Heart left ventricle (tissue), 16 donors: ENCODE measurements at regions of chr16 and their contacts with region 1.

Region 1: DNA sequence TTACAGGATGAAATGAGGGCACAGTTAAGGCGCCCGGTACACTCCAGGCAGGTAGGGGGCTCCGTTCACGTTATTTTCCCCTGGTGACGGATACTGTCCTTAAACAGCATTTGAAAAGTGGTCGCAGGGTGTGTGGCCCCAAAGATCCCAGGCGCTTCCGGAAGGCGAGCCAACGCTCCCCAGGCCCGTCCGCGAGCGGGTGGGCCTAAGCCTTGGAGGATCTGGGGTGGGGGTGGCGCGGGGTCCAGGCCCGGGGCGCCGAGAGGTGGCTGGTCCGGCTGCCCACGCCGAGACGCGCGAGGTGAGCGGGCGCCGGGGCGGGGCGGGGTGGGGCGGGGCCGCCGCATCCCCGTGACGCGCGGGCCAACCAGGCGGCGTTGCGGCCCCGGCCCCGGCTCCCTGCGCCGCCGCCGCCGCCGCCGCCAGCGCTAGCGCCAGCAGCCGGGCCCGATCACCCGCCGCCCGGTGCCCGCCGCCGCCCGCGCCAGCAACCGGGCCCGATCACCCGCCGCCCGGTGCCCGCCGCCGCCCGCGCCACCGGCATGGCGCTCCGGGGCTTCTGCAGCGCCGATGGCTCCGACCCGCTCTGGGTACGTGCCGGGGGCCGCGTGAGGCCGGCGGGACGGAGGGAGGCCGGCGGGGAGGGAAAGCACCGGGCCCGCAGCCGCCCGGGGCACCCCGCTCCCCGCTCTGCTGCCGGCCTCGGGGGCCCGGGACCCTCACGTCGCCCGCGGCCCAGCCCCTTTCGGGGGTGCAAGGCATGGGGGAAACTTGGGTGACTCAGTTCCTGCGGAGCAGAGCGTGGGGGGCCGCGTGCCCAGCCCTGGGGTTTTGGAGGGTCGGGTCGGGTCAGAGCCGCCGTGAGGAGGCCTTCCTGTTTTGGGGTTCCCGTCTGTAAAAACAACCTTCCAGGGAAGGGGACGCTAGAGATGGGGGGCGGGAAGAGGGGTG is at the start of gene ABCC1:
- DNase-seq: peak; percentile 33 to 75 (median 51)
- ATAC-seq: peak in 3 of 4 donors; percentile 68 to 86 (median 84)
- H3K4me3 ChIP-seq: peak within 1 kb of the TSS; percentile 67 to 98 (median 86)
- H3K27ac ChIP-seq: peak within 1 kb of the TSS; percentile 15 to 87 (median 79)
- H3K4me1 ChIP-seq: peaks cover 0 to 47% (median 21%) of the 10 kb centered on the region in 12 donors
- H3K27me3 ChIP-seq: no peaks in the 10 kb centered on the region
- CTCF ChIP-seq: peak in 3 of 12 donors; percentile 8 to 22 (median 13)
- POLR2A ChIP-seq: no peak
- total RNA-seq, gene ABCC1: 14.4 to 28.0 (median 24.0) TPM

Region 2: DNA sequence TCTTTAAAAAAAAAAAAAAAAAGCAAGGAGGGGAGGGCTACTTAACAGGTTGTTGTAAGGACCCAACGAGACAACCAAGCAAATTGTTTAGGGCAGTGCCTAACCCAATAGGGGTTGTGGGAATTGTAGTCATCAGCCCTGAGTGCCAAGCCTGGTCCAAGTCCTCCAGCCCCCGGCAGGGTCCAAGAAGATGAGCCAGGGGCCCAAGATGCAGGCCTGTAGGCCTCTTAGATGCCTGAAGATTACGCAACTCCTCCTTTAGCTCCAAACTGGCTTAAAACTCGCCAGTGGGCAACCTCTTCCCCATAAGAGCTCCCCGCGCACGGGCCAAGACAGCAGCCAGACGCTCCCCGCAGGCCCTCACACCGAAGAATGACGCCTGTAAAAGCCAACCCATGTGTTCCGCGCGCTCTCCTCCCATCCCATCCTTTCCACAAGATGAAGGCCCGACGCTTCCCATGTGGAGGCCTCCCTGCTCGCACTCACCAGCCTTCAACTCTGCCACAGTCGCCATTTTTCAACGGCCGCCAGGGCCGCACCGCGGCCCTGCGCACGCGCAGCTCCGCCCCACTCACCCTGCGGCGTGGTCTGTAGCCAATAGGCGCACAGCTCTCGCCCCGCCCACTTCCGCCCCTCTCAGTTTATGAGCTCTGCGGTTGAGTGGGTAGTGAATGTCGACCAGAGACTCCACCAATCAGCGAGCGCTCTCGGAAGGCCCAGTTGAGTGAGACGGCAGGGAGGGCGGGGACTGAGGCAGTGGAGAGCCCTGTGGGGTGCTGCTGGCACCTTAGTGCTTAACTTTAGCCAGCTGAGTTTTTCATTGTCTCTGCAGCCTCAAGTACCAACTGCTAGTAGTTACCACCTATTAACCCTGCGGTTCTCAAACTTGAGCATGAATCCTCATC is 61.2 kb before region 1 on chr16 and contains the start of gene CEP20:
- intact Hi-C with region 1: loop called in 4 of 10 experiments (anchors 5 to 10 kb)
- DNase-seq: peak; percentile 100
- ATAC-seq: peak; percentile 100
- H3K4me3 ChIP-seq: peak within 1 kb of the TSS; percentile 55 to 97 (median 79)
- H3K27ac ChIP-seq: peak within 1 kb of the TSS; percentile 36 to 92 (median 85)
- H3K4me1 ChIP-seq: peaks cover 0 to 33% (median 23%) of the 10 kb centered on the region in 12 donors
- H3K27me3 ChIP-seq: no peaks in the 10 kb centered on the region
- CTCF ChIP-seq: peak in 7 of 12 donors; percentile 17 to 41 (median 25)
- POLR2A ChIP-seq: peak; percentile 39 to 80
- total RNA-seq, gene CEP20: 23.0 to 40.3 (median 28.7) TPM

Region 3: DNA sequence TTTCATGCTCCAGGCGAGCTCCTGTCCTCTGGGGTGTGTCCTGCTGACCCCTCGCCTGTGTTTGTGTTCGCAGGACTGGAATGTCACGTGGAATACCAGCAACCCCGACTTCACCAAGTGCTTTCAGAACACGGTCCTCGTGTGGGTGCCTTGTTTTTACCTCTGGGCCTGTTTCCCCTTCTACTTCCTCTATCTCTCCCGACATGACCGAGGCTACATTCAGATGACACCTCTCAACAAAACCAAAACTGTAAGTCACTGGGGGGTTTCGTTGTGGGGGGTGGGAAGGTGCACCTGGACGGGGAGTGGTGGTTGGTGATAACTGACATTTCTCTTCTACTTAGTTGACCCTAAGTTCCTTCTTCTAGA is 58.2 kb after region 1 on chr16:
- intact Hi-C with region 1: loop called in 2 of 10 experiments (anchors 5 kb)
- DNase-seq: no peak
- ATAC-seq: no peak
- H3K4me3 ChIP-seq: no peak overlapping the region
- H3K27ac ChIP-seq: no peak overlapping the region
- H3K4me1 ChIP-seq: peaks cover 0 to 9% (median 0%) of the 10 kb centered on the region in 12 donors
- H3K27me3 ChIP-seq: no peaks in the 10 kb centered on the region
- CTCF ChIP-seq: no peak
- POLR2A ChIP-seq: no peak

Region 4: GRCh38 chr16:16021988-16022682 is 72.7 kb after region 1 on chr16:
- intact Hi-C with region 1: loop called in 2 of 10 experiments (anchors 5 to 10 kb)
- DNase-seq: peak; percentile 94 to 98 (median 95)
- ATAC-seq: peak; percentile 97 to 99 (median 98)
- H3K4me3 ChIP-seq: peak overlapping the region in 1 of 12 donors; percentile 14
- H3K27ac ChIP-seq: peak overlapping the region; percentile 62 to 88 (median 81)
- H3K4me1 ChIP-seq: peaks cover 8 to 38% (median 22%) of the 10 kb centered on the region in 12 donors
- H3K27me3 ChIP-seq: no peaks in the 10 kb centered on the region
- CTCF ChIP-seq: no peak
- POLR2A ChIP-seq: no peak

Region 5: GRCh38 chr16:16036359-16036792 is 86.9 kb after region 1 on chr16:
- intact Hi-C with region 1: no loop called
- DNase-seq: no peak
- ATAC-seq: no peak
- H3K4me3 ChIP-seq: no peak overlapping the region
- H3K27ac ChIP-seq: no peak overlapping the region
- H3K4me1 ChIP-seq: peaks cover 0 to 8% (median 0%) of the 10 kb centered on the region in 12 donors
- H3K27me3 ChIP-seq: no peaks in the 10 kb centered on the region
- CTCF ChIP-seq: no peak
- POLR2A ChIP-seq: no peak

Region 6: DNA sequence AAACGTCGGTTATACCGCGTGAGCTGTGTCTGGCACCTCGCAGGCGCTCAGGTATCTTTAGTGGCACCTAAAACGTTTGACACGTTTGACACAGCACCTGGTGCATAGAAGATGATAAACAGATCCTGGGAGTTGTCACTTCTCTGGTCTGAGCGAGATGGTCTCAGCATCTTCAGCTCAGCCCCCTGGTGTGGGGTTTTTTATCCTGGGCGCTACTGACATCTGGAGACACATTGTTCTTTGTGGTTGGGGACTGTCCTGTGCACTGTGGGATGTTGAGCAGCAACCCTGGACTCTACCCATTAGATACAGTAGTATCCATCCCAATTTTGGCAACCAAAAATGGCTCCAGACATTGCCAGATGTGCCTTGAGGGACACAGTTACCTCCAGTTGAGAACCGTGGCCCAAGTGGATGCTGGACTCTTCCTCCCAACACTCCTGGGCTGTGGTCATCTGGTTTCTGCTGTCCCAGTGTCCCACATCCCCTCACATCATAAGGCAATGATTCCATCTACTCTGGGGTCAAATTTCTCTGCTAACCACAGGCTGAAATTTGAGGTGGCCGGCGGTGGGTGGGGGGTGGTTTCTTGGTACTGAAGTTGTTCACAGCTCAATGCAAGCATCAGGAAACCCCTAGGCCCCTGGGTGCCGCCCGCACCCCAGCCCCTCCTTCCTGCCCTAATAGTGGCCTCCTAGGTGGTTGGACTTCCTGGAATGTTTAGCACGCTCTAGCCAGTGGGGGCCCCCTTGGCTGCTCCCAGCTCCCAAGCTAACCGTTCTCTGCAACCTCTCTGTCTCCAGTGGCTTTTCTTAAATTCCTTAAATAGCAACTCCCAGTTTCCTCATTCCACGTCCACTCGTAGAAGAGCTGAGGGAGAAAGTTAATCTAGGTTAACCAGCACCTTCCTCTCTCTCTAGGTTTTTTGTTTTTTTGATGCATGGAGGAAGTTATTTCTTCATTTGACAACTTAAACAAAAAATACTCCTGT is 124.7 kb after region 1 on chr16:
- intact Hi-C with region 1: loop called in 1 of 10 experiments (anchors 10 kb)
- DNase-seq: no peak
- ATAC-seq: peak in 3 of 4 donors; percentile 17 to 54 (median 33)
- H3K4me3 ChIP-seq: no peak overlapping the region
- H3K27ac ChIP-seq: peak overlapping the region in 5 of 12 donors; percentile 2 to 74 (median 33)
- H3K4me1 ChIP-seq: peaks cover 0 to 36% (median 21%) of the 10 kb centered on the region in 12 donors
- H3K27me3 ChIP-seq: no peaks in the 10 kb centered on the region
- CTCF ChIP-seq: no peak
- POLR2A ChIP-seq: no peak